ENCODE measurements at regions of chr10 and their contacts with region 1.

Region 1: DNA sequence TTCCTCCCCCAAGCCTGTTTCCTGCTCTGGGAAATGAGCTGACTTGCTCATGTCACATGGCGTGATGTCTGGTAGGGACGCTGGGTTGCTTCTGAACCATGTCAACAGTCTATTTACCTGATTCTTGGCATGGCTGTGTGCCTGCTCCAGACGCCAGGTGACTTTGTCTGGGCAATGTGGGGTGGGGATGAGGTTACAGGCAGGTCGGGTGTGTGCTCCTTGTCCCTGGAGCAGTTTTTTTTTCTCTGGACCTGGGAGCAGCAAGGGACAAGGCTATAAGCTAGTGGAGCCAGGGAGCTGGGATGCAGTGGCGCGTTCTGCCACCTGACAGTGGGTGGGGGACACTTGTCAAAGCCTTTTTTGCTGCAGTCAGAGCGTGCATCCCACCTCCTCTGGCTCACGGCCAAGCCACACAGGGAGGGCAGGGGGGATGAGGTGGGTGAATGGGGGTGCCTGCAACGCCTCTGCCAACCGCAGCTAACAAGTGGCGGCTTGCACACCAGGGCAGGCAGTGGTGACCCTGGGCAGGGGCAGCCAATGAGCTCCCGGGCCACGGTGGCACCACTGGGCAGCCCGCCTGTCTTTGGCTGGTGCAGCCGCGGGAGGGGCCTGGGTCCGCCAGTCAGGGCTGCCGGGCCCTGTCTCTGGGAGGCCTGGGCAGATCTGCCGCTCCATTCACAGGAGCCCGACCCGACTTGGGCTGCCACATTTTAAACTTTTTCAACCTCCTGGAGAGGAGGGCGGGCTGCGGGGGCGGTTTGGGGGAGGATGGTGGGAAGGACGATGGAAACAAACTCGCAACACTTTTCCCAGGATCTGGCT is 22.9 kb downstream of the DNAJB12 start:
- DNase-seq: peak; percentile 93
- ATAC-seq: peak; percentile 79
- H3K4me3 ChIP-seq: peak overlapping the region in 4 of 5 experiments; percentile 31 to 38 (median 35)
- H3K4me3 Mint-ChIP-seq: peak overlapping the region; percentile 76
- H3K27ac ChIP-seq: peak overlapping the region; percentile 83 to 86
- H3K27ac Mint-ChIP-seq: peak overlapping the region; percentile 96
- H3K4me1 ChIP-seq: peaks cover 84 to 100% of the 10 kb centered on the region in 2 donors
- H3K4me1 Mint-ChIP-seq: peaks cover 90% of the 10 kb centered on the region
- H3K27me3 ChIP-seq: no peaks in the 10 kb centered on the region
- H3K27me3 Mint-ChIP-seq: no peaks in the 10 kb centered on the region
- CTCF ChIP-seq: peak; percentile 55

Region 2: GRCh38 chr10:72088889-72089575 is 242.8 kb before region 1 on chr10:
- CTCF ChIA-PET with region 1: interaction called, 13 read pairs
- POLR2A ChIA-PET with region 1: interaction called, 6 read pairs
- intact Hi-C with region 1: loop called (anchors 5 kb)
- DNase-seq: no peak
- ATAC-seq: no peak
- H3K4me3 ChIP-seq: peak overlapping the region in 4 of 5 experiments; percentile 79 to 93 (median 88)
- H3K4me3 Mint-ChIP-seq: peak overlapping the region; percentile 100
- H3K27ac ChIP-seq: peak overlapping the region; percentile 89 to 92
- H3K27ac Mint-ChIP-seq: peak overlapping the region; percentile 100
- H3K4me1 ChIP-seq: peaks cover 24 to 33% of the 10 kb centered on the region in 2 donors
- H3K4me1 Mint-ChIP-seq: peaks cover 47% of the 10 kb centered on the region
- H3K27me3 ChIP-seq: no peaks in the 10 kb centered on the region
- H3K27me3 Mint-ChIP-seq: no peaks in the 10 kb centered on the region
- CTCF ChIP-seq: no peak

Region 3: GRCh38 chr10:72248468-72249151 is 83.2 kb before region 1 on chr10:
- CTCF ChIA-PET with region 1: interaction called, 48 read pairs
- POLR2A ChIA-PET with region 1: interaction called, 14 read pairs
- intact Hi-C with region 1: loop called (anchors 1 kb)
- DNase-seq: peak; percentile 85
- ATAC-seq: peak; percentile 76
- H3K4me3 ChIP-seq: peak overlapping the region in 4 of 5 experiments; percentile 26 to 49 (median 44)
- H3K4me3 Mint-ChIP-seq: peak overlapping the region; percentile 91
- H3K27ac ChIP-seq: peak overlapping the region; percentile 76 to 81
- H3K27ac Mint-ChIP-seq: peak overlapping the region; percentile 98
- H3K4me1 ChIP-seq: peaks cover 78 to 83% of the 10 kb centered on the region in 2 donors
- H3K4me1 Mint-ChIP-seq: peaks cover 80% of the 10 kb centered on the region
- H3K27me3 ChIP-seq: no peaks in the 10 kb centered on the region
- H3K27me3 Mint-ChIP-seq: no peaks in the 10 kb centered on the region
- CTCF ChIP-seq: no peak

Region 4: GRCh38 chr10:72292223-72292691 is 39.6 kb before region 1 on chr10:
- CTCF ChIA-PET with region 1: interaction called, 20 read pairs
- POLR2A ChIA-PET with region 1: interaction called, 68 read pairs
- intact Hi-C with region 1: loop called (anchors 1 kb)
- DNase-seq: no peak
- ATAC-seq: no peak
- H3K4me3 ChIP-seq: no peak overlapping the region
- H3K4me3 Mint-ChIP-seq: no peak overlapping the region
- H3K27ac ChIP-seq: peak overlapping the region in 1 of 2 donors; percentile 15
- H3K27ac Mint-ChIP-seq: peak overlapping the region; percentile 86
- H3K4me1 ChIP-seq: peaks cover 17 to 22% of the 10 kb centered on the region in 2 donors
- H3K4me1 Mint-ChIP-seq: peaks cover 40% of the 10 kb centered on the region
- H3K27me3 ChIP-seq: no peaks in the 10 kb centered on the region
- H3K27me3 Mint-ChIP-seq: no peaks in the 10 kb centered on the region
- CTCF ChIP-seq: no peak

Region 5: GRCh38 chr10:72319416-72320254 is 12.2 kb before region 1 on chr10:
- CTCF ChIA-PET with region 1: interaction called, 128 read pairs
- POLR2A ChIA-PET with region 1: interaction called, 73 read pairs
- intact Hi-C with region 1: loop called (anchors 1 kb)
- DNase-seq: peak; percentile 92
- ATAC-seq: peak; percentile 65
- H3K4me3 ChIP-seq: peak overlapping the region in 4 of 5 experiments; percentile 49 to 68 (median 58)
- H3K4me3 Mint-ChIP-seq: peak overlapping the region; percentile 88
- H3K27ac ChIP-seq: peak overlapping the region; percentile 94 to 95
- H3K27ac Mint-ChIP-seq: peak overlapping the region; percentile 99
- H3K4me1 ChIP-seq: peaks cover 78 to 91% of the 10 kb centered on the region in 2 donors
- H3K4me1 Mint-ChIP-seq: peaks cover 78% of the 10 kb centered on the region
- H3K27me3 ChIP-seq: no peaks in the 10 kb centered on the region
- H3K27me3 Mint-ChIP-seq: no peaks in the 10 kb centered on the region
- CTCF ChIP-seq: no peak

Region 6: GRCh38 chr10:72740528-72740927 is 408.7 kb after region 1 on chr10:
- CTCF ChIA-PET with region 1: no interaction called
- POLR2A ChIA-PET with region 1: no interaction called
- intact Hi-C with region 1: no loop called
- DNase-seq: no peak
- ATAC-seq: no peak
- H3K4me3 ChIP-seq: no peak overlapping the region
- H3K4me3 Mint-ChIP-seq: no peak overlapping the region
- H3K27ac ChIP-seq: no peak overlapping the region
- H3K27ac Mint-ChIP-seq: no peak overlapping the region
- H3K4me1 ChIP-seq: peaks cover 0 to 3% of the 10 kb centered on the region in 2 donors
- H3K4me1 Mint-ChIP-seq: peaks cover 29% of the 10 kb centered on the region
- H3K27me3 ChIP-seq: no peaks in the 10 kb centered on the region
- H3K27me3 Mint-ChIP-seq: no peaks in the 10 kb centered on the region
- CTCF ChIP-seq: no peak

Measured in B cell (primary cell).